Aorta (tissue), 5 donors: ENCODE measurements at regions of chr6 and their contacts with region 1.

Region 1: DNA sequence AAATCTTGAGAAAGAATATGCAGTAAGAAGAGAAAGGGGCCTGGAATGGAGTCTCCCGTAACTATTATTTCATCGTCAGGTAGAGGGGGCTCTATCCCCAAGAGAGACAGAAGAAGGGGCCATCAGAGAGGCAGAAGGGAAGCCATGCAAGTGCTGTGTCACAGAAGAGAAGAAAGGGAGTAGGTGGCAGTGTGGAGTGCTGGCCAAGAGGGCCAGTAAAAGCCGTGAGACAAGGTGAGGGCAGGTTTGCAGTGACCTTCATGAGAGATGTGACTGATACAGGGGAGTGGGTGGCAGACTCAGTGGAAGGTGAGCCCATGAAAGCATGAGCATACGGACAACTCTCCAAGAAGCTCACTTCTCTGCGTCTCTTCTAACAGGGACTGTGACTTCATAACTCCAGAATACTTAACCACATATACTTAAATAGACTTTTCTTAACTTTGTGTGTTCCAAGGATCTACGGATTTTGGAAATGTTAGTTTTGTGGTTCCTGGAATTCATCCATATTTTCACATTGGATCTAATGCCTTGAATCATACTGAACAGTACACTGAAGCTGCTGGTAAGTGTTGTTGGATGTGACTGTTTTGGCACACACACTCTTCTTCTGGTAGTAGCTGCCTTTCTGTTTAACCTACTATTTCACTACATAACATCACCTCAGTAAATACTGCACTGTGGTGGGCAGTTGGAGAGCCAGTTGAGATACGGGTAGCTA is 15.6 kb downstream of the PM20D2 start:
- DNase-seq: no peak
- ATAC-seq: peak; percentile 77
- H3K4me3 ChIP-seq: peak overlapping the region in 1 of 2 donors; percentile 18
- H3K27ac ChIP-seq: peak overlapping the region; percentile 62 to 99
- H3K4me1 ChIP-seq: peaks cover 1 to 8% of the 10 kb centered on the region in 2 donors
- H3K27me3 ChIP-seq: no peaks in the 10 kb centered on the region

Region 2: DNA sequence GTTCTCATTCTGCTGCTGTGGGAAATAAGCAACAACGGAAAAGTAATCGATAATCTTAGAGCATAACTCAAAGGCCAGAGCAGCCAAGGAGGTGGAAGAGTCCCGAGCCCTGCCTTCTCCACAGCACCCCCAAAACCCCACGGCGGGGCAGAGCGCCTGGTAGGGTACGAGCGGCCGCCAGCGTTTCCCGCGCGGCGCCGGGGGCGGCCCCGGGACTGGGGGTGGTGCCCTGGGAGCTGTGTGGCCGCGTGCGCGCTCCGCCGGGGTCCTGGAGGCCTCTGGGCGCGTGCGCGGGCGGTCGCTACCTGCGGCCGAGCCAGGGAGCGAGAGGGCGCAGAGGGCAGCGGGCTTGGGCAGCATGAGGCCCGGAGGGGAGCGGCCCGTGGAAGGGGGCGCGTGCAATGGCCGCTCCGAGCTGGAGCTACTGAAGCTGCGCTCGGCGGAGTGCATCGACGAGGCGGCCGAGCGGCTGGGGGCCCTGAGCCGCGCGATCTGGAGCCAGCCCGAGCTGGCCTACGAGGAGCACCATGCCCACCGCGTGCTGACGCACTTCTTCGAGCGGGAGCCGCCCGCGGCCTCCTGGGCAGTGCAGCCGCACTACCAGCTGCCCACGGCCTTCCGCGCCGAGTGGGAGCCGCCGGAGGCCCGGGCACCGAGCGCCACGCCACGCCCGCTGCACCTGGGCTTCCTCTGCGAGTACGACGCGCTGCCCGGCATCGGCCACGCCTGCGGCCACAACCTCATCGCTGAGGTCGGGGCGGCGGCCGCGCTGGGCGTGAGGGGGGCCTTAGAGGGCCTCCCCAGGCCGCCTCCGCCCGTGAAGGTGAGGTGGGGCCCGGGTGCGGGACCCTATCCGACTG is 15.5 kb before region 1 on chr6 and contains the start of gene PM20D2:
- intact Hi-C with region 1: loop called in 1 of 2 experiments (anchors 2 kb)
- DNase-seq: peak; percentile 77 to 90
- ATAC-seq: peak; percentile 93
- H3K4me3 ChIP-seq: peak within 1 kb of the TSS; percentile 69 to 91
- H3K27ac ChIP-seq: peak within 1 kb of the TSS; percentile 31 to 70
- H3K4me1 ChIP-seq: peaks cover 0 to 7% of the 10 kb centered on the region in 2 donors
- H3K27me3 ChIP-seq: no peaks in the 10 kb centered on the region
- total RNA-seq, gene PM20D2: 22.7 to 23.5 TPM

Region 3: GRCh38 chr6:89208551-89208950 is 47.1 kb after region 1 on chr6:
- intact Hi-C with region 1: no loop called
- DNase-seq: peak in 1 of 2 donors; percentile 59
- ATAC-seq: no peak
- H3K4me3 ChIP-seq: no peak overlapping the region
- H3K27ac ChIP-seq: no peak overlapping the region
- H3K4me1 ChIP-seq: peaks cover 0 to 7% of the 10 kb centered on the region in 2 donors
- H3K27me3 ChIP-seq: no peaks in the 10 kb centered on the region

Region 4: DNA sequence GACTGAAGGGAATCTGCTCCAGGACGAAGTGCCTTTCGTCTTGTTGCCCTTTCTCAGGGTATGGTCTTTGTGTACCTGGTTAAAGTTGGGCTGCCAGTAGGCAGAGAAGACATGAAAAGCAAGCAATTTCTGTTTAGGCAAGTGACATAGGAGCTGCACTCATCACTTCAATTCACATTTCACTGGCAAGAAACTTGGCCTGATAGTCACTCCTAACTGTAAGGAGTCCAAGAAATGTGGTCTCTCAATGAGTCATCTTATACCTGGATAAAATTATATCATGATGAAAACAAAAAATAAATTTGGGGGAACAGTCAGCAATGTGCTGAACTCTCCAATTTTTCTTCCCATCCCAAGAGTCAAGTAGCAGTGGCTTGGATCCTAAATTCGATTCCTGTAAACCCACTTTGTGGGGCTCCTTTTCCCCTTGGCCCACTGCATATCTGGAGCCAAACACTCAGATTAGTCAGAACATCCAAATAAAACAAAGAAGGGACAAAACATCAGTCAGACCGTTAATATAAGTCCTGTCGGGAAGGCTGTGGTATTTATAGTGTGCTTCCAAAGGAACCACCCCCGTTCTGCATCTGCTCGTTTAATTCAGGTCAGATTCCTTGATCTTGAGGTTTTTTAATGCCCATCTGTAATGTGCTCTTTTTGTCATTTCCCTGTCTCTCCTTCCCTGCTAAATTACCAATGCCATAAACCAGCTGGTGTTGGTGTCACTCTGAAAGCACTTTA is 60.7 kb after region 1 on chr6:
- intact Hi-C with region 1: loop called (anchors 2 to 5 kb)
- DNase-seq: no peak
- ATAC-seq: peak; percentile 71
- H3K4me3 ChIP-seq: no peak overlapping the region
- H3K27ac ChIP-seq: peak overlapping the region; percentile 57 to 73
- H3K4me1 ChIP-seq: peaks cover 2 to 8% of the 10 kb centered on the region in 2 donors
- H3K27me3 ChIP-seq: no peaks in the 10 kb centered on the region